ENCODE measurements at regions of chr3 and their contacts with region 1.

Region 1: GRCh38 chr3:50611464-50612233 is at the start of gene CISH:
- DNase-seq: peak; percentile 98
- H3K4me3 Mint-ChIP-seq: peak within 1 kb of the TSS; percentile 99
- H3K27ac Mint-ChIP-seq: peak within 1 kb of the TSS; percentile 98
- H3K4me1 Mint-ChIP-seq: peaks cover 55% of the 10 kb centered on the region
- H3K27me3 Mint-ChIP-seq: no peaks in the 10 kb centered on the region
- total RNA-seq, gene CISH: 334 and 341 TPM in 2 replicates

Region 2: DNA sequence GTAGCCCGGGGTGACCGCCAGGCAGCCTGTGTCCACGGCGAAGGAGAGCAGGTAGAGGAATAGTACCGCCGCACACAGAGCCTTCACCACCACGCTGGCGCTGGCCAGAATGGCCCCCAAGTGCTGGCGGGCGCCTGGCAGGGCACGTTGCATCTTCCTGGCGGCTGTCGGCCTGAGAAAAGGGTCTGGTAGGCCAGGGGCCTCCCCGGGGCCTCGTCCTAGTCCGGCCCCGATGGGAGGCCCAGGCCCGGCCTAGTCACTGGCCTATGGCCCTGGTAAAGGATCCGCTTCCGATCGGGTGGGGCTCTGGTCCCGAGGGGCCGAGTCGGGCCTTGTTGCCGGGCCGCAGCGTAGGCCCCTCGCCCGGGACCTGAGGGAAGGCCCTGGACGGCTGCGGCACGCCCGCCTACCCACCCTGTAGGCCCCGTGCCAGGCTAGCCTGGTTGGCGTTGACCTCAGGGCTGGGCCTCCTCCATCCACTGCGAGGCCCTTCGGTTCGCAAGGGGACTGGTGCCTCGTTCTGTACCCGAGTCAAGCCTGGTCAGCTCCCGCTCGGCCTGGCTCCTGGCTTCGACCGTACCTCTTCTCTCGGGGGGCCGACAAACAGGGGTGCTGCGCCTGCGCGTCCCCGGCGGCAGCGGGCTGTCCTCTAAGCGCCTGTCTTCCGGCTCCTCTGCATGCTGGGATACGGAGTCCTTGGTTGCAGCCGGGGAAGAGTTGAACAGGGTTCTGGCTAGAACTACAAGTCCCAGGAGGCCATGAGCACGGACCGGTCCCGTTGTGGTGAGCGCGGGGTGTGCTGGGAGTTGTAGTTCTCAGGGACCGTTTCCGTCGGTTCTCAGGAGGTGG is 252.5 kb before region 1 on chr3 and contains the start of gene TMEM115:
- intact Hi-C with region 1: loop called (anchors 2 kb)
- DNase-seq: peak; percentile 95
- H3K4me3 Mint-ChIP-seq: peak within 1 kb of the TSS; percentile 99
- H3K27ac Mint-ChIP-seq: peak within 1 kb of the TSS; percentile 96
- H3K4me1 Mint-ChIP-seq: peaks cover 43% of the 10 kb centered on the region
- H3K27me3 Mint-ChIP-seq: peaks cover 4% of the 10 kb centered on the region
- total RNA-seq, gene TMEM115: 23.6 and 25.4 TPM in 2 replicates

Region 3: DNA sequence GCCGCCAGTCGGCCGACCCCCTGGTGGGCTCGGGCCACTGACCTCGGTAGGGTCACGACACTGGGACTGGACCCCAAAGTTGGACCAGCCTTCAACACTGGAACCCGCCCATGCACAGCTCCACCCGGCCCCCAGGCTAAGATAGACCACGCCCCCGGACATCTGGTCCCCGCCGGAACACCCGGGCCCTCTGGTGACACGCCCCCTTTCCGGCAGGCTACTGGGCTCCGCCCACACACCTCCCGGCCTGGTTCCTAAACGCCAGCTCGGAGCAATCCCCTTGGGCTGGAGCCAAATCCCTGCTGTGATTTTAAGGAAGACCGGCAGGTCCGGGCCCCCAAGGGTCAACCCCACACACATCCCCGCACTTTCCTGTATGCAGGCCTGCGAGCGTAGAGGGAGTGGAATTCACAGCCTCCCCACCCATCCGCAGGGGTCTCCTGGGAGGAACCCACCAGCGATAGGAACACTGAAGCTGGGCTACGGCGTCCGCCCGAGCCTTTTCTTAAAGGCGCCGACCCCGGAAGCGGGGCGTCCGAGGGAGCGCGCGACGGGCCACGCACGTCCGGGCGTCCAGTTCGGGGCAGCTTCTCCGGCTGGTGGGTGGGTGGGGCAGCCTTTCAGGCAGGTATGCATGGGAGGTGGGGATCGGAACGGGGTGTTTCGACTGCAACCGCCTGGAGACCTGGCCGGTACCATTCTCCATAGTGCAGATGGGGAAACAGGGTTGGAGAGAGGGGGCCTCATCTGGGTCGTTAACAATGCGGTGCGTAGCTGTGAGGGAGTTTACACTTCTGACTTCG is 42.5 kb before region 1 on chr3 and contains the start of gene HEMK1:
- intact Hi-C with region 1: loop called (anchors 1 kb)
- DNase-seq: peak; percentile 92
- H3K4me3 Mint-ChIP-seq: peak within 1 kb of the TSS; percentile 97
- H3K27ac Mint-ChIP-seq: peak within 1 kb of the TSS; percentile 97
- H3K4me1 Mint-ChIP-seq: peaks cover 78% of the 10 kb centered on the region
- H3K27me3 Mint-ChIP-seq: no peaks in the 10 kb centered on the region
- total RNA-seq, gene HEMK1: 54.1 and 58.0 TPM in 2 replicates

Region 4: DNA sequence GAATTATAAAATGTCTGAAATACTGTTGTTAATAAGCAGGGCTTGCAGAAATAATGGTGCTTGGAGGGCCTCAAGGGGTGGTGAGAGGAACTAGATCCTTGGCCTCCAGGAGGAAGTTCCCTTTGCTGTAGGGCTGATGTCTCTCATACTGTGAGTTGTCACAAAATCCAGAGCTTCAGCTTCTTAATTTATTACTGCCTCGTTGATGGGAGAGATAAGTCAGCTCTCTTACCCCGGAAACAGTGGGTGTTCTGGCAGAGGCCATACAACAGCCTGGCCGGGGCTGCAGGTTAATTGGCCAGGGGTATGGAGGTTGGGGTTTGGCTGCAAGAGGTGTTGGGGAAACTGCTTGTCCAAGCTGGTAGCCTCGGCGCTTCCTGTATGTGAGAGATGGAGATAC is 20.8 kb after region 1 on chr3:
- intact Hi-C with region 1: loop called (anchors 2 kb)
- DNase-seq: no peak
- H3K4me3 Mint-ChIP-seq: peak overlapping the region; percentile 38
- H3K27ac Mint-ChIP-seq: peak overlapping the region; percentile 87
- H3K4me1 Mint-ChIP-seq: peaks cover 93% of the 10 kb centered on the region
- H3K27me3 Mint-ChIP-seq: no peaks in the 10 kb centered on the region

Region 5: DNA sequence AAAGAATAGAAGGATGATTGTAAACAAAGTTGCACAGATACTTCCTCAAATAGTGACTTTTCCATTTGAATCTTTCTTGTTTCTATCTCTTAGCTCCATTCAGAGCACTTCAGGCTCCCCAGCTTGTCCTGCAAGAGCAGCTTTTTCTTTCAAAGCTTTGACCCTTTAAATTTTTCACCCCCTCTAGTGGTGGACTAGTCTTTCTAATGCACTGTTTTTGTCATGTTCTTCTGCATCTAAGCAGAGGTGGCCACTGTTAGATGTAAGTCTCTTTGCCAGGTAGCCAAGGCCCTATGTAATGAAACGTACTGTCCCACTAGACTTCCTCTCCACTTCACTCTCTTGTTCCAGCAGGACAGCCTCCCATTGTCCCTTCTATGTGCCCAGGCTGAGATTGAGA is 699.4 kb after region 1 on chr3:
- intact Hi-C with region 1: loop called (anchors 2 kb)
- DNase-seq: no peak
- H3K4me3 Mint-ChIP-seq: no peak overlapping the region
- H3K27ac Mint-ChIP-seq: no peak overlapping the region
- H3K4me1 Mint-ChIP-seq: no peaks in the 10 kb centered on the region
- H3K27me3 Mint-ChIP-seq: no peaks in the 10 kb centered on the region

Region 6: DNA sequence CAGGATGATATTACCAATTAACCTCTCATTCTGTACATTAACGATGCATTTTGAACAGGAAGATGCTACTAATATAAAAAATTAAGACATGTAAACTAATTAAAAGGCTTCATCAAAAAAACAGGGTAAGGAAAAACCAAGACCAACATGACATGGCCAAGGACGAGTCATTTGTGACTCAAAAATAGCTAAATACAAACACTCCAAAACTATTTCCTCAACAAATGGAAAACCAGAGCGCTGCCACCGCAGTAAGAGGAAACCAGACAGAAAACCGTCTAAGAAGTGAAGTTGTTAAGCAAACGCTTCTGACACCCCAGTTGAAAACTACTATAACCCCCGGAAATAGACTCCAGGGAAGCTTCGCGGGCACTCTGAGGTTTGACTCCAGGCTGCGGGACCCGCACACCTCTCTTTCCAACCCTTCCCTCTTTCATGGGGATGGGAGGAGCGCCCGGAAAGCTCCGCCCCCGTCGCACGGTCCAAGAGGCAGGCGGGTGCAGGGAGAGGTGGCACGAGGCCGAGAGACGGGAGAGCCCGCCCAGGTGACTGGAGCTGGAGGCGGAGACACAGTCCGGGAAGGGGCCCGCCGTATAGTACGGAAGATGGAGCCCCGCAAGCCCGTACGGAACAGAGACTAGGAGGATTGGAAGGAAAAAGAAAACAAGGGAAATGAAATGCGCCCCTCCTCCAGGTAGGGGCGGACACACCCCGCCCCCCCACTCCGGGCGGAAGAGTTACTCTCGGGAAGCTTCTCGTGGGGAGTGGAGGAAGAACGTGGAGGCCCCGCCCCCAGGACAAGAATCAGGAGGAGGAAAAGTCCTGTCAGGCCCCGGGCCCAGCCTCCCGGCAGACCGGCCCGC is 887.5 kb after region 1 on chr3:
- intact Hi-C with region 1: loop called (anchors 1 kb)
- DNase-seq: peak; percentile 85
- H3K4me3 Mint-ChIP-seq: peak overlapping the region; percentile 88
- H3K27ac Mint-ChIP-seq: peak overlapping the region; percentile 95
- H3K4me1 Mint-ChIP-seq: peaks cover 21% of the 10 kb centered on the region
- H3K27me3 Mint-ChIP-seq: peaks cover 3% of the 10 kb centered on the region

Measured in activated T-helper 1 cell treated with anti-CD3 and anti-CD28 coated beads, Interleukin-12 subunit alpha, Interleukin-12 subunit beta, Interleukin-2, Interleukin-4 antibody, amounts not matched to agents 30 ng/mL and 10 ng/mL and 1 ng/mL, durations not matched to agents 14 hours and 24 hours and 36 hours (primary cell).